ENCODE measurements at regions of chr17 and their contacts with region 1.

Region 1: GRCh38 chr17:40707720-40708119 is 4.2 kb upstream of the KRT24 start:
- DNase-seq: peak; percentile 74
- H3K4me3 Mint-ChIP-seq: no peak overlapping the region
- H3K27ac Mint-ChIP-seq: peak overlapping the region; percentile 84
- H3K4me1 Mint-ChIP-seq: peaks cover 30% of the 10 kb centered on the region
- H3K27me3 Mint-ChIP-seq: no peaks in the 10 kb centered on the region
- CTCF ChIP-seq: no peak

Region 2: DNA sequence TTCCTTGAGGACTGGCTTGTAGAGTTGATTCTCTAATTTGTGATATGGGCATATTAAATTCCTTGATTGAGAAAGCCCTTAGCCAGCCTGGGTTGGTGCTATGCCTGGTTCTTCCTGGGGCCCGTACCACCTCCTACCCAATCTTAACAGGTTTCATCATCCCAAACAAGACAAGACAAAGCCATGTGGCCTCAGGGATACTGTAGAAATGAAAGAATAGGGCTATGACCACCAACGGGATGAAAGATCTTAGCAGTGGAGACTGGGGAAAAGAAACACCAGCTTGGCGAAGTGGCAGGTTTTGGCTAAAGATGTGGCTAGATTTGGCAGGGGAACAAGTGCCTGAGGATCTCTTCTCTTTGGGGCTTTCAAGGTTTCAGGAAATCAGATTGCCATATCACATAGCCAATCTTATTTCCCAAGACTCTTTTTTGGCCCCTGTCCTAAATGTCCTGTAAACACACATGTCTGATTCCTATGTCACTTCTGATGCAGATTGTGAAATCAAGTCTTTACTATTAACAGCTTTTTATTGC is 11.1 kb before region 1 on chr17:
- CTCF ChIA-PET with region 1: interaction called, 3 read pairs
- POLR2A ChIA-PET with region 1: interaction called, 16 read pairs
- intact Hi-C with region 1: no loop called
- DNase-seq: peak; percentile 84
- H3K4me3 Mint-ChIP-seq: no peak overlapping the region
- H3K27ac Mint-ChIP-seq: peak overlapping the region; percentile 70
- H3K4me1 Mint-ChIP-seq: peaks cover 13% of the 10 kb centered on the region
- H3K27me3 Mint-ChIP-seq: no peaks in the 10 kb centered on the region
- CTCF ChIP-seq: no peak

Measured in MCF 10A (cell line).